ENCODE measurements at regions of chr3 and their contacts with region 1.

Region 1: GRCh38 chr3:82133070-82133606 is 371.7 kb upstream of the GBE1 start:
- DNase-seq: peak; percentile 54
- H3K4me3 Mint-ChIP-seq: no peak overlapping the region
- H3K27ac Mint-ChIP-seq: no peak overlapping the region
- H3K4me1 Mint-ChIP-seq: peaks cover 7% of the 10 kb centered on the region
- H3K27me3 Mint-ChIP-seq: no peaks in the 10 kb centered on the region
- CTCF ChIP-seq: peak; percentile 70

Region 2: DNA sequence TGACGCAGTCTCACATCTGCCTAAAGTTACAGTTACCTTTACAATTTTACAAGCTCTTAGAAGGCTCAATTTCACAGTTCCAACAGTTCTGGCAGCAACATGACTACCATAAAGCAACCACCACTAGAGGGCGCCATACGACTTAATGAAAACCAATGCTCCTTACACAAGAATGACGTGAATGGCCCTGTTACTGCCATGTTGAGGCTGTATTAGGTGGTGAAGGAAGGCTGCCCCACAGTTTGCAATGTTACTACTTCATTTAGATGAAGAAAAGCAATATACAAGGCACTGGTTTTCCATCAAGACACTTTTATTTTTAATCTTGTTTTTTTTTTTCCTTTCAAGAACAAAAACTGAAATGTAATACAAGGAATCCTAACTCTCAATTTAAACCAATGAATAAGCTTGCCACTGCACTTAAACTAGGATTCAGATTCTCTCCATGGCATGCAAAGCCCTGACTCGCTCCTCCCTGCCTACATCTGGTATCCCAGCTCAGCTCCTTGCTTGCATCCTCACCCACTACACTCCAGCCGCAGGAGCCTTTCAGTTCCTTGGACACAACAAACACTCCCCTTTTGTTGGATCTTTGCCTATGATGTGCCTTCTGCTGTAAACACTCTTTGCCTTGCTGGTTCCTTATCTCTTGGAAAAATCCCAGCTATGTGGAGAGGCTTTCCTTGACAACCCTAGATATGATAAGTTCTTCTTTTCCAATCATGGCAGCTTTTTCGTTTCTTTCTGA is 642.4 kb before region 1 on chr3:
- CTCF ChIA-PET with region 1: no interaction called
- intact Hi-C with region 1: loop called (anchors 2 kb)
- DNase-seq: peak; percentile 79
- H3K4me3 Mint-ChIP-seq: no peak overlapping the region
- H3K27ac Mint-ChIP-seq: no peak overlapping the region
- H3K4me1 Mint-ChIP-seq: no peaks in the 10 kb centered on the region
- H3K27me3 Mint-ChIP-seq: no peaks in the 10 kb centered on the region
- CTCF ChIP-seq: peak; percentile 49

Region 3: GRCh38 chr3:81666493-81667121 is 466.5 kb before region 1 on chr3:
- CTCF ChIA-PET with region 1: no interaction called
- intact Hi-C with region 1: loop called (anchors 1 kb)
- DNase-seq: no peak
- H3K4me3 Mint-ChIP-seq: no peak overlapping the region
- H3K27ac Mint-ChIP-seq: no peak overlapping the region
- H3K4me1 Mint-ChIP-seq: no peaks in the 10 kb centered on the region
- H3K27me3 Mint-ChIP-seq: no peaks in the 10 kb centered on the region
- CTCF ChIP-seq: no peak

Region 4: GRCh38 chr3:81871358-81872155 is 261.6 kb before region 1 on chr3:
- CTCF ChIA-PET with region 1: no interaction called
- intact Hi-C with region 1: loop called (anchors 10 kb)
- DNase-seq: no peak
- H3K4me3 Mint-ChIP-seq: no peak overlapping the region
- H3K27ac Mint-ChIP-seq: no peak overlapping the region
- H3K4me1 Mint-ChIP-seq: no peaks in the 10 kb centered on the region
- H3K27me3 Mint-ChIP-seq: no peaks in the 10 kb centered on the region
- CTCF ChIP-seq: no peak

Region 5: DNA sequence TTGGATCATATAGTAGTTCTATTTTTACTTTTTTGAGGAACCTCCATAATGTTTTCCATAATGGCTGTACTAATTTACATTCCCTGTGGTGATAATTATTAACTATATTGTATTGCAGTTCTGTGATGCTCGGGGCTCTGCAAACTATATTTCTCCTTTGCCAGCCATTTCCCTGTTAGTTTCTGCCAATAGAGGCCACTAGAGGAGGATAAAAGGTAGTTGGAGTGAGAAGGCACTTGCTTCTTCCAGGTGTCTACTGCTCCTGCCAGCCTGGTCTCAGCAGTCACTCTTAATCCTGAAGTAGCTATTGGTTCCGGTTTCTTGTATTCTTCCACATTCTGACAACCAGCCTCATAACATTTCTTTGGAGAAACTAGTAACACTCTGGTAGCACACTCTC is 137.8 kb before region 1 on chr3:
- CTCF ChIA-PET with region 1: interaction called, 3 read pairs
- intact Hi-C with region 1: loop called (anchors 1 kb)
- DNase-seq: no peak
- H3K4me3 Mint-ChIP-seq: no peak overlapping the region
- H3K27ac Mint-ChIP-seq: no peak overlapping the region
- H3K4me1 Mint-ChIP-seq: no peaks in the 10 kb centered on the region
- H3K27me3 Mint-ChIP-seq: no peaks in the 10 kb centered on the region
- CTCF ChIP-seq: no peak

Region 6: GRCh38 chr3:82179291-82179690 is 46.2 kb after region 1 on chr3:
- CTCF ChIA-PET with region 1: no interaction called
- intact Hi-C with region 1: no loop called
- DNase-seq: no peak
- H3K4me3 Mint-ChIP-seq: no peak overlapping the region
- H3K27ac Mint-ChIP-seq: no peak overlapping the region
- H3K4me1 Mint-ChIP-seq: no peaks in the 10 kb centered on the region
- H3K27me3 Mint-ChIP-seq: no peaks in the 10 kb centered on the region
- CTCF ChIP-seq: no peak

Measured in Calu3 (cell line).